Activated B cell treated with CpG ODN at 0.5 μM for 24 hours (primary cell): ENCODE measurements at regions of chr2 and their contacts with region 1.

Region 1: DNA sequence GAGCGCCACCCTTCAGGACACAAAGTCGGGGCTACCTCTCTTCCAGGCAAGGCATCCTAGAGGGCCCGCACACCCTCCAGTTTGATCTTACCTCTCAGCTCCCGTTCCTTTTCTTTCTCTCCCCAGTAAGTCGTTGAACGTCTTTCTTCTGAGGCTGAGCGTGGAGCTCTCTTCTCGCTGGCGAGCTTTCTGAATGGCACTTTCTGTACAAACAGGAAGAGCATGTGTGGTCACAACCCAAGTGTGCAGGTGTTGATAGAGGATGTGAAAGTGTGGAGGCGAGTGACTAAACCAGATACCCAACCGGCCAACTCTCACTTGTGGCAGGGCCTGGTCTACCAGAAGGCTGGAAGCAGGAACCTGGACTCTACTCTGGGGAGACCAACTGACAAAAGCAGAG is at the start of gene AFF3:
- DNase-seq: peak; percentile 65
- ATAC-seq: peak; percentile 86
- H3K4me3 Mint-ChIP-seq: peak within 1 kb of the TSS; percentile 99
- H3K27ac Mint-ChIP-seq: peak within 1 kb of the TSS; percentile 99
- H3K4me1 Mint-ChIP-seq: peaks cover 47% of the 10 kb centered on the region
- H3K27me3 Mint-ChIP-seq: no peaks in the 10 kb centered on the region
- CTCF ChIP-seq: no peak
- total RNA-seq, gene AFF3: 228 and 271 TPM in 2 replicates

Region 2: DNA sequence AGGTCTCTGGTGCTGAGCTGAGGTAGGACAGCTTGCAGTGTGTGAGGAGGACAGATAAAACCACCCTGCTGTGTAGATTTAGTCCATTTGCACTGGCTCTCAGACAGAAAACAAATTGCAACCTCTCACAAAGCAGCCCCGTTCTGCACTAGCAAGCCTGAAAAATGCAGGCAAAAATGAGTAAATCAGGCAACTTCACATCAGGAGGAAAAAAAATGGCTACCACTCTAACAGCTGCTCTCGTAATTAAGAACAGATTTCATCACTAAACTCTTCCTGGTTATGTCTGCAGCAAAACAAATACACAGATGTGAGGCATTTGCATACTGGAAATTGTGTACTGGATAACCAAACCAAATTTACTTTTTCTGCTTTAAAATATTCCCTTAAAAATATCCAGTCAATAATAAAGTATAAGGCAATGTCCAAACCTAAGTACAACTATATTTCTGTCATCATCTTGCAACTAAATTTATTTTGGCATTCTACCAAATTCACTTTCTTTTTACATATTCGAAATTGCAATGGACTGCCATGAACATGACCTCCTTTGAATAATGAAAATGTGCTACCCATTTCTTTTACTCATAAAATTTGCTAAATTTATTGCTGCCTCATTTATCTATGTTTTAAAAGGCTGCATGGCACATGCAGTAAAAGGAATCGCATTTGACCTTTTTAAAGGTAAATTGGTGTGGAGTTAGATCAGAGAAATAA is 157.4 kb before region 1 on chr2:
- CTCF ChIA-PET with region 1: no interaction called
- POLR2A ChIA-PET with region 1: no interaction called
- intact Hi-C with region 1: no loop called
- DNase-seq: no peak
- ATAC-seq: no peak
- H3K4me3 Mint-ChIP-seq: no peak overlapping the region
- H3K27ac Mint-ChIP-seq: no peak overlapping the region
- H3K4me1 Mint-ChIP-seq: peaks cover 7% of the 10 kb centered on the region
- H3K27me3 Mint-ChIP-seq: no peaks in the 10 kb centered on the region
- CTCF ChIP-seq: no peak

Region 3: GRCh38 chr2:99998651-99999320 is 143.6 kb before region 1 on chr2:
- CTCF ChIA-PET with region 1: no interaction called
- POLR2A ChIA-PET with region 1: no interaction called
- intact Hi-C with region 1: no loop called
- DNase-seq: no peak
- ATAC-seq: no peak
- H3K4me3 Mint-ChIP-seq: no peak overlapping the region
- H3K27ac Mint-ChIP-seq: no peak overlapping the region
- H3K4me1 Mint-ChIP-seq: peaks cover 4% of the 10 kb centered on the region
- H3K27me3 Mint-ChIP-seq: no peaks in the 10 kb centered on the region
- CTCF ChIP-seq: no peak

Region 4: GRCh38 chr2:100104718-100105677 is 37.4 kb before region 1 on chr2:
- CTCF ChIA-PET with region 1: interaction called, 4 read pairs
- POLR2A ChIA-PET with region 1: interaction called, 149 read pairs
- intact Hi-C with region 1: no loop called
- DNase-seq: peak; percentile 50
- ATAC-seq: peak; percentile 62
- H3K4me3 Mint-ChIP-seq: peak overlapping the region; percentile 89
- H3K27ac Mint-ChIP-seq: peak overlapping the region; percentile 91
- H3K4me1 Mint-ChIP-seq: peaks cover 44% of the 10 kb centered on the region
- H3K27me3 Mint-ChIP-seq: no peaks in the 10 kb centered on the region
- CTCF ChIP-seq: no peak

Region 5: GRCh38 chr2:100126201-100126600 is 16.2 kb before region 1 on chr2:
- CTCF ChIA-PET with region 1: interaction called, 3 read pairs
- POLR2A ChIA-PET with region 1: interaction called, 15 read pairs
- intact Hi-C with region 1: no loop called
- DNase-seq: no peak
- ATAC-seq: no peak
- H3K4me3 Mint-ChIP-seq: no peak overlapping the region
- H3K27ac Mint-ChIP-seq: peak overlapping the region; percentile 30
- H3K4me1 Mint-ChIP-seq: peaks cover 80% of the 10 kb centered on the region
- H3K27me3 Mint-ChIP-seq: no peaks in the 10 kb centered on the region
- CTCF ChIP-seq: no peak

Region 6: GRCh38 chr2:100178051-100178788 is 35.8 kb after region 1 on chr2:
- CTCF ChIA-PET with region 1: no interaction called
- POLR2A ChIA-PET with region 1: interaction called, 3 read pairs
- intact Hi-C with region 1: loop called (anchors 2 kb)
- DNase-seq: no peak
- ATAC-seq: peak; percentile 84
- H3K4me3 Mint-ChIP-seq: no peak overlapping the region
- H3K27ac Mint-ChIP-seq: peak overlapping the region; percentile 24
- H3K4me1 Mint-ChIP-seq: peaks cover 17% of the 10 kb centered on the region
- H3K27me3 Mint-ChIP-seq: no peaks in the 10 kb centered on the region
- CTCF ChIP-seq: no peak

Region 7: GRCh38 chr2:100381240-100381639 is 238.8 kb after region 1 on chr2:
- CTCF ChIA-PET with region 1: no interaction called
- POLR2A ChIA-PET with region 1: interaction called, 3 read pairs
- intact Hi-C with region 1: loop called (anchors 1 kb)
- DNase-seq: peak; percentile 71
- ATAC-seq: peak; percentile 97
- H3K4me3 Mint-ChIP-seq: no peak overlapping the region
- H3K27ac Mint-ChIP-seq: peak overlapping the region; percentile 31
- H3K4me1 Mint-ChIP-seq: peaks cover 8% of the 10 kb centered on the region
- H3K27me3 Mint-ChIP-seq: no peaks in the 10 kb centered on the region
- CTCF ChIP-seq: no peak